Ascending aorta (tissue), 2 donors: ENCODE measurements at regions of chr13 and their contacts with region 1.

Region 1: DNA sequence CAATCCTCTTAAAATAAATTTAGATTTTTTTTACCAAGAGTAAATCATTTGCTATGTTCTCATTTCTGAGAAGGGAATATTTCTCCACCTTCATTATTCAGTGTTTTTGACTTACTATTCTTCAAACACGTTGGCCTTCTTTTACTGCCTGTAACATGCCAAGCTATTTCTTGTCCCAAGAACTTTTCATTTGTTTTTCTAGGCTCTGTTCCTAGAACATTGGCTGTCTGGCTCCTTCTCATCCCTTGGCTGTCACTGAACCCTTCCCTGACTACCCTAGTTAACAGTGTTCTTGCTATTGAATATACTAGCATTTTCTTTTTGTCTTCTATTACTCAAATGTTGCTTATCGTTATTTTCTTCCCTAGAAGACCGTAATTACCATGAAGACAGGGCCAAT is 248.1 kb downstream of the ITGBL1 start:
- DNase-seq: no peak
- H3K4me3 ChIP-seq: peak overlapping the region in 1 of 2 donors; percentile 36
- H3K27ac ChIP-seq: peak overlapping the region; percentile 85 to 87
- H3K4me1 ChIP-seq: peaks cover 5 to 11% of the 10 kb centered on the region in 2 donors
- H3K27me3 ChIP-seq: no peaks in the 10 kb centered on the region
- CTCF ChIP-seq: no peak

Region 2: DNA sequence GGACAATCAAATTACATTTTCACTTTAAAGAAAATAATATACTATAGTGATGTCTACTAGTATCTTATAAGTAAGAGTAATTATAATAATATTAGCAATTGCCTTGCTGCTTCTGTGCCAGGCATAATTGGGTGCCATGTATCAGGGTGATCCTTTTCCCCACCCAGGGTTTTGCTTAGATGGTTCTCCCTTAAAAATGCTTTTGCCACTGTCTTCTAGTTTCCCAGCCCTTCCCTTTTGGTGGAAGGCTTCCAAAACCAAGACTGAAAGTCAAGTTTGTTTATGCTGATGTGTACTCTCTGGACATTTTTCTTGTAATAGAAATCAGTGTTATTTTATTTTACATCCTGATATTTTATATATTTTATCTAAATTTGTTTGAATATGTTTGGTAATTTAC is 170.3 kb before region 1 on chr13:
- intact Hi-C with region 1: loop called (anchors 5 kb)
- DNase-seq: no peak
- H3K4me3 ChIP-seq: no peak overlapping the region
- H3K27ac ChIP-seq: peak overlapping the region in 1 of 2 donors; percentile 76
- H3K4me1 ChIP-seq: peaks cover 0 to 59% of the 10 kb centered on the region in 2 donors
- H3K27me3 ChIP-seq: no peaks in the 10 kb centered on the region
- CTCF ChIP-seq: no peak

Region 3: GRCh38 chr13:101673360-101674105 is 27.1 kb before region 1 on chr13:
- intact Hi-C with region 1: no loop called
- DNase-seq: no peak
- H3K4me3 ChIP-seq: no peak overlapping the region
- H3K27ac ChIP-seq: no peak overlapping the region
- H3K4me1 ChIP-seq: no peaks in the 10 kb centered on the region
- H3K27me3 ChIP-seq: no peaks in the 10 kb centered on the region
- CTCF ChIP-seq: no peak